ENCODE measurements at regions of chr17 and their contacts with region 1.

Region 1: GRCh38 chr17:7862692-7863437 is 5.1 kb downstream of the CYB5D1 start:
- H3K4me3 ChIP-seq: no peak overlapping the region
- H3K27ac ChIP-seq: no peak overlapping the region
- H3K4me1 ChIP-seq: peaks cover 5% of the 10 kb centered on the region
- CTCF ChIP-seq: peak; percentile 67

Region 2: GRCh38 chr17:7873051-7873450 is 10.2 kb after region 1 on chr17:
- CTCF ChIA-PET with region 1: interaction called, 21 read pairs
- POLR2A ChIA-PET with region 1: interaction called, 3 read pairs
- H3K4me3 ChIP-seq: no peak overlapping the region
- H3K27ac ChIP-seq: no peak overlapping the region
- H3K4me1 ChIP-seq: no peaks in the 10 kb centered on the region
- CTCF ChIP-seq: no peak

Region 3: DNA sequence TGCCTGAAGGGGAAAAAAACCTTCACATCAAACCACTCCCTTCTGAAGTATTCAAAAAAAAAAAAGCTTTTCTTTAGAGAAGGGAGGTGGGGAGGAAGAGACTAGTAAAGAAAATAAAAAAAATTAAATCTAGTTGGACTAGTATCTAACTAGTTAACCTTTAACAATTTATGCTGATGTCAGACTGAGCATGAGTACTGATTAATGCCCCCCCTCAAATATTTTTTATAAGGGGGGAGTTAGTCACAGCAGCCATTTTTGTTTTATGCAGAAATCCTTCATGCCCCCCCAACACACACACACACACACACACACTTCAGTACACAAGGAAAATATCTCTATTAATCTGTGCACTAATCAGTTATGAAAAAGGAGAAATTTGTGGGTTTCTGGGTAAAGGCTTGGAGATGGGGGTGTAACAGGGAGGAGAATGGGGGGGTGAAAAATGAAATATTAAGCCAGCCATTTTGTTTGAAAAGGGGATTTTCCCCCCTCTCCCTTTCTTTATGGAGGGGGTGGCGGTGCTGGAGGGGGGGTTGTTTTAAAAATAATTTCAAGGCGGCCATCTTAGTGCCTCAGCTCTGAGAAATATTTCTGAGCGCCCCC is 21.0 kb after region 1 on chr17:
- CTCF ChIA-PET with region 1: interaction called, 23 read pairs
- POLR2A ChIA-PET with region 1: interaction called, 3 read pairs
- H3K4me3 ChIP-seq: peak overlapping the region; percentile 55
- H3K27ac ChIP-seq: peak overlapping the region; percentile 35; the same call in 1 of the 2 replicates
- H3K4me1 ChIP-seq: peaks cover 22% of the 10 kb centered on the region
- CTCF ChIP-seq: no peak

Region 4: GRCh38 chr17:7897773-7898172 is 34.9 kb after region 1 on chr17:
- CTCF ChIA-PET with region 1: interaction called, 94 read pairs
- POLR2A ChIA-PET with region 1: interaction called, 5 read pairs
- H3K4me3 ChIP-seq: no peak overlapping the region
- H3K27ac ChIP-seq: no peak overlapping the region
- H3K4me1 ChIP-seq: peaks cover under 1% of the 10 kb centered on the region; the same call in 1 of the 2 replicates
- CTCF ChIP-seq: peak; percentile 81

Region 5: GRCh38 chr17:7915611-7916382 is 52.9 kb after region 1 on chr17 and contains the start of gene RNF227:
- CTCF ChIA-PET with region 1: interaction called, 29 read pairs
- POLR2A ChIA-PET with region 1: interaction called, 6 read pairs
- H3K4me3 ChIP-seq: peak within 1 kb of the TSS; percentile 58
- H3K27ac ChIP-seq: peak within 1 kb of the TSS; percentile 90
- H3K4me1 ChIP-seq: peaks cover 14% of the 10 kb centered on the region
- CTCF ChIP-seq: no peak; the same call in 1 of the 2 replicates

Region 6: GRCh38 chr17:7931709-7932482 is 69.0 kb after region 1 on chr17 and contains the starts of genes CNTROB and TRAPPC1:
- CTCF ChIA-PET with region 1: interaction called, 12 read pairs
- POLR2A ChIA-PET with region 1: interaction called, 6 read pairs
- H3K4me3 ChIP-seq: peak within 1 kb of the TSS; percentile 93
- H3K27ac ChIP-seq: peak within 1 kb of the TSS; percentile 57; the same call in 1 of the 2 replicates
- H3K4me1 ChIP-seq: peaks cover 5% of the 10 kb centered on the region; the same call in 1 of the 2 replicates
- CTCF ChIP-seq: no peak

Region 7: GRCh38 chr17:8073627-8074484 is 211.0 kb after region 1 on chr17:
- CTCF ChIA-PET with region 1: interaction called, 3 read pairs
- POLR2A ChIA-PET with region 1: interaction called, 10 read pairs
- H3K4me3 ChIP-seq: peak overlapping the region; percentile 28
- H3K27ac ChIP-seq: no peak overlapping the region
- H3K4me1 ChIP-seq: no peaks in the 10 kb centered on the region
- CTCF ChIP-seq: peak; percentile 92